ENCODE measurements at regions of chr11 and their contacts with region 1.

Region 1: DNA sequence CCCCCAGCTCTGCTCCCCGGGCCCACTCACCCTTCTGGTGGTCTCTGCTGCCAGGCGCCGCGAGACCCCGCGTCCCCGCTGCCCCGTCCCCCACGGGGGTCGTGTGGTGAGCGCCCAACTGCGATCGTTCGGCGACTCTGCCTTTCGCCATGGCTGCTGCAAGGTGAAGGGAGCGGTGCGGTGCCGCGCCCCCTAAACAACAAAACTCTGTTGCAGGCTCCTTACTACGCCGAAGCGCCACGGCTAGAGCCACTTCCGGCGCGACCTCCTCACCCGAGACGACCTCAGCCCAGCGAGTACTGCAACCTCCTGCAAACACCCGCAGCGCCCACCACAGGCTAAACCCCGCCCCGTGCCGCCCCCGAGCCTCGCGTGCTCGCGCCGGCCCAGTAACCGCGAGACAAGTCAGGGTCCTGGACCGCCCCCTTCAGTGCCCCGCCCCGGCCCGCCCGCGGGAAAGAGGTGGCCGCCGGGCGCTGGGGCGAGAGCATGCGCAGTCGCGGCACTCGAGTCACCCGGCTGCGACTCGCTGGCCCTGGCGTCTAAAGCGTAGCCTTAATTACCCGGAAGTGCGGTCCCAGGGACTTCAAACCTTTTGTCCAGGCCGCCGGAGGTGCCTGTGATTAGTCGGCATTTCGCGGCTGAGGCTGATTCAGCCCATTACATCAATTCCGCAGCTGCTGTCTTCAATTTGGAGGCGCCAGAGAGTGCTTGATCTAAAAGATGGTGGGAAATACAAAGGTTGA is at the start of gene TMEM41B:
- DNase-seq: peak; percentile 99
- H3K4me3 ChIP-seq: peak within 1 kb of the TSS; percentile 99
- H3K27ac ChIP-seq: peak within 1 kb of the TSS; percentile 87
- H3K4me1 ChIP-seq: peaks cover 41% of the 10 kb centered on the region
- H3K27me3 ChIP-seq: peaks cover 12% of the 10 kb centered on the region
- CTCF ChIP-seq: peak; percentile 22
- total RNA-seq, gene TMEM41B: 20.2 TPM

Region 2: GRCh38 chr11:9384535-9385303 is 70.3 kb after region 1 on chr11 and contains the start of gene IPO7:
- intact Hi-C with region 1: loop called (anchors 10 kb)
- DNase-seq: peak; percentile 90
- H3K4me3 ChIP-seq: peak within 1 kb of the TSS; percentile 97
- H3K27ac ChIP-seq: peak within 1 kb of the TSS; percentile 97
- H3K4me1 ChIP-seq: peaks cover 57% of the 10 kb centered on the region
- H3K27me3 ChIP-seq: no peaks in the 10 kb centered on the region
- CTCF ChIP-seq: peak; percentile 44
- total RNA-seq, gene IPO7: 150 TPM

Measured in left ventricle myocardium inferior (tissue), 1 donor.